HCT116 (cell line): ENCODE measurements at regions of chr15 and their contacts with region 1.

Region 1: DNA sequence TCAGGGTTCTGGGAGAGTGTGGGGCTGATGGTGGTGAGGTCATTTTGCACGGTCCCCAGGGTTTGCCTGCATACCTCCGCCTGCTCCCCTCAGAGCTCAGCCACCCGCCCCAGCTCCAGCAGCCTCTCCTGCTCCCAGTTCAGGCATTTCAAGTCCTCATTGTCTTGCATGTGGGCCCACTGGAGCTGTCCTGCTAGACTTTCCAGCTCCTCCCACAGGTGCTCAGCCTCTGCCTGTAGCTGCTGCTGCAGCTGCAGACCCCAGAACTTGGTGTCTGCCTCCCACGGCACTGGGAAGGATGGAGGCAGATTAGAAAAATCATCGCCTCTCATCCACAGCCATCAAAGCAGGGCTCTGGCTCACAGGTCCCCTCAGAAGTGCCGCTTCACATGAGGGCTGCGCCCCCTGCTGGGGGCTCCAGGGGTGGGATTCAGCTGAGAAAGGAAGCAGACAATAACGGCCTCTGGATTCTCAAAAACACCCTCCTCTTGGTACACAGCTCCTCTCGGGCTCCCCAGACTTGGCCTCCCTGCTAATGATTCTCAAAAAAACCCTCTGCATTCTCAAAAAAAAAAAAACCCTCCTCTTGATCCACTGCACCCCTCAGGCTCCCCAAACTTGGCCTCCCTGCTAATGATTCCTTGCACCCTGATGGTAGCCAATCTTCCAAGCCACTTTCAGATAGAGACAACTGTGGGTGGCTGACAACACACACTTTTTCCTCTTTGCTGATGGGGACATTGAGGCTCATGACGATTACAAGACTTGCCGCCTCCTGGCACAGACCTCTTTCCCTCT is 89.3 kb upstream of the C2CD4B start:
- DNase-seq: peak; percentile 49
- ATAC-seq: peak; percentile 90
- H3K4me3 ChIP-seq: no peak overlapping the region
- H3K27ac ChIP-seq: no peak overlapping the region
- H3K4me1 ChIP-seq: no peaks in the 10 kb centered on the region
- H3K27me3 ChIP-seq: peaks cover 6% of the 10 kb centered on the region; the same call in 1 of the 2 replicates
- CTCF ChIP-seq: peak; percentile 50 to 89 (median 86); a peak in 5 of 6 replicates
- POLR2A ChIP-seq: no peak
- RAD21 ChIP-seq: peak; percentile 58

Region 2: DNA sequence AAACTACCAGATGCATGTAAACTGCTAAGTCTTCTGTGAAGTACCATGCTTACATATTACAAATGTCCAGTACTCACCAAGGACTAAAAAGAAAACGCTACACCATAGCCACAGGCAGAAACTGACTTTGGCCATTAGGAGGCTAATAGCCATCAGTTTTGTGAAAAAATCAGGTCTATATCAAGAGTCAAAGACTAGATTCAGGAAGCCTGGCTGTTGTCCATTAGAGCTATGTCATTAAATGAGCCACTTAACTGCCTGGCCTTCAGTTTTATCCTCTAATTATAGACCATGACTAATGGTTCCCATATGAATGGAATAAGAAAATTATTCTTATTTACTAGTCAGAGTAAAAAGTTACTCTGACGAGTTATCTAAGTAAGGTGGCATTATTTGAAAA is 338.2 kb before region 1 on chr15:
- CTCF ChIA-PET with region 1: no interaction called
- POLR2A ChIA-PET with region 1: no interaction called
- RAD21 ChIA-PET with region 1: no interaction called
- intact Hi-C with region 1: no loop called
- DNase-seq: no peak
- ATAC-seq: no peak
- H3K4me3 ChIP-seq: no peak overlapping the region
- H3K27ac ChIP-seq: no peak overlapping the region
- H3K4me1 ChIP-seq: no peaks in the 10 kb centered on the region
- H3K27me3 ChIP-seq: no peaks in the 10 kb centered on the region
- CTCF ChIP-seq: no peak
- POLR2A ChIP-seq: no peak
- RAD21 ChIP-seq: no peak

Region 3: DNA sequence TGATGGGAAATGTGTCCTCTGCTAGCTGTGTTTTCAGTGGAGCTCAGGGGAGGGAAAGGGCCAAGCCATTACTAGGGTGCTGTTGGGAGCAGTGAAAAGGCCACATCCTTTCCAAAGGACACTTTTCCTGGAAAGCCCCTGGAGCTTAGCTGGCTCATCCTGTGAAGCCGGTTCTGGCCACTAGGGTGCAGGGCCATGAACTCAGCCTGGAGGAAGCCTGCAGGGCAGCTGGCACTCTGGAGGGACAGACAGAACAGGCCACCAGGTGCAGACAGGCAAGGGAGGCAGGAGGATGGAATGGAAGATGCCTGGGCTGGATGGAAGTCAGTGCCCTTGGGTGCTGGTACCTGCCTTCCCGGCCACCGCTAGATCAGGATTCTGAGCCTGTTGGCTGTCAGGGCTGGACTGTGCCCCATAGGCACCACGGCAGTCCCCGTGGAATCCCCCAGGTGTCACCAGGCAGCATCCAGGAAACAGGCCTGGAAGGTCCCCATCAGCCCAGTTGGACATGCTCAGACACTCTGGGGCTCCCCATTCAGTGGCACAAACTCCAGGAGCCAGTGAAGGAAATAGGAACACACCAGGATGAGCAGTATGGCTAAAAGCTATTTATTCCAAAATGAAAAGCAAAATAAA is 13.1 kb before region 1 on chr15:
- CTCF ChIA-PET with region 1: interaction called, 23 read pairs
- POLR2A ChIA-PET with region 1: no interaction called
- RAD21 ChIA-PET with region 1: no interaction called
- intact Hi-C with region 1: no loop called
- DNase-seq: peak; percentile 36
- ATAC-seq: peak; percentile 96
- H3K4me3 ChIP-seq: no peak overlapping the region
- H3K27ac ChIP-seq: no peak overlapping the region
- H3K4me1 ChIP-seq: 0 out of 4 replicates have a peak, but pooled peaks cover 0 to 2% of the 10 kb centered on the region in 2 experiments
- H3K27me3 ChIP-seq: no peaks in the 10 kb centered on the region
- CTCF ChIP-seq: peak; percentile 40 to 77 (median 67); a peak in 5 of 6 replicates
- POLR2A ChIP-seq: no peak
- RAD21 ChIP-seq: peak; percentile 22; the same call in 1 of the 2 replicates